ENCODE measurements at regions of chr6 and their contacts with region 1.

Region 1: DNA sequence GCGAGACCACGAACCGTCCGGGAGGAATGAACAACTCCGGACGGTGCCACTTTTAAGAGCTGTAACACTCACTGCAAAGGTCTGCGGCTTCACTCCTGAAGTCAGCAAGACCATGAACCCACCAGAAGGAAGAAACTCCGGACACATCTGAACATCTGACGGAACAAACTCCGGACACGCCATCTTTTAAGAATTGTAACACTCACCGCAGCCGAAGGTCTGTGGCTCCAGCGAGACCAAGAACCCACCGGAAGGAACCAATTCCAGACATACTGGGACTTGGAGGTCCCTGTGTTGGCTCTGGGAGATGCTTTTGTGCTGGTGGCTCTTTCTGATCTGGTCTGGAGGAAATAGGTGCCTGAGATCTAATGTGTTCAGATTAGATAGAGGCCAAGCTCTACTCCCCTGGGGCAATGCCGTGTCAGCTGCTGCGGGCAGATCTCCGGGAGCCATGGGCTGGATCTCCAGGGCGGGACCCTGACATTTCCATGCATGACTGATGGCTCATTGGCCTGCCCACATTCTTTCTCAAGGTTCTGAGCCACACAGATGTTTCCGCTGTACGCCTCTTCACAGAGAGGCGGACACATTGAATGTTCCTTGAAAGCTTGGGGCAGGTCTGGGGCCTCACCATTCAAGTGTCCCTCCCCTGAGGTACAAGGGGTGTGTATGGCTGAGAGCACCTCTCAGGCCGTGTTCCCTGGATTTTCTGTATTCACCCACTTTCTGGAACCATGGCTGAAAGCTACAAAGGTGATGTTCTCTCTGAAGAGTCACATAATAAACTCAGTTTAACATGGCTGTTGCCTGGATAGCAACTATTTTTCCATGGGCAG is 29.3 kb downstream of the GMPR start:
- DNase-seq: peak; percentile 91 to 98 (median 92)
- ATAC-seq: peak; percentile 81
- H3K4me3 ChIP-seq: peak overlapping the region; percentile 42
- H3K27ac ChIP-seq: peak overlapping the region; percentile 83
- H3K4me1 ChIP-seq: peaks cover 28 to 44% of the 10 kb centered on the region in 2 experiments
- H3K27me3 ChIP-seq: no peaks in the 10 kb centered on the region
- CTCF ChIP-seq: no peak
- EP300 ChIP-seq: peak; percentile 96
- POLR2A ChIP-seq: peak; percentile 89
- RAD21 ChIP-seq: no peak; a peak in 1 of 4 replicates

Region 2: DNA sequence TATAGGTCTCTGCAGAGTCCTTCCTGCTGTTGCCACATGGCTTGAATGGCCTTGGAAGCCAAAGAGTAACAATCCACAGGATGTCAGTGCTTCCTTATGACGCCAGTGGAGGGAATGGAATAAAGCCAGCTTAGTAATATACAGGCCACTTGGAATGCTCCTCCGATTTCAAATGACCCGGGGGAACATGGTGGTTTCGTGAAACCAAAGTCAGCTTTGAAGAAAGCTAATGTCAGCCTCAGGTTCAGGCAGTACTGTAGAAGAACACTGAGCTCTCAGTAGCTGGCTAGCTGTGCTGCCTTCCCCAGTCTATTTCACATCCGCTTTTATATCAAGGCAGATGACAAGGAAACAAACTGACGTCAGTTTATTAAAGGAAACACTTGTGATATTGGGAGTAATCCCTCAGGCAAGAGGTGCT is 793.9 kb before region 1 on chr6:
- CTCF ChIA-PET with region 1: no interaction called
- POLR2A ChIA-PET with region 1: no interaction called
- in situ Hi-C with region 1: no loop called
- intact Hi-C with region 1: no loop called
- DNase-seq: no peak
- ATAC-seq: no peak
- H3K4me3 ChIP-seq: no peak overlapping the region
- H3K27ac ChIP-seq: no peak overlapping the region
- H3K4me1 ChIP-seq: 0 out of 5 replicates have a peak, but pooled peaks cover 0 to 3% of the 10 kb centered on the region in 2 experiments
- H3K27me3 ChIP-seq: no peaks in the 10 kb centered on the region
- CTCF ChIP-seq: no peak
- EP300 ChIP-seq: no peak
- POLR2A ChIP-seq: no peak
- RAD21 ChIP-seq: no peak

Region 3: GRCh38 chr6:15893556-15894268 is 373.9 kb before region 1 on chr6:
- CTCF ChIA-PET with region 1: no interaction called
- POLR2A ChIA-PET with region 1: interaction called, 5 read pairs
- in situ Hi-C with region 1: no loop called
- intact Hi-C with region 1: loop called (anchors 5 kb)
- DNase-seq: peak; percentile 61 to 81 (median 70)
- ATAC-seq: 0 out of 3 replicates have a peak, but pooled peaks have one; percentile 9
- H3K4me3 ChIP-seq: no peak overlapping the region
- H3K27ac ChIP-seq: 0 out of 3 replicates have a peak overlapping the region, but pooled peaks have one; percentile 6
- H3K4me1 ChIP-seq: peaks cover 14 to 51% of the 10 kb centered on the region in 2 experiments
- H3K27me3 ChIP-seq: no peaks in the 10 kb centered on the region
- CTCF ChIP-seq: peak; percentile 58 to 85 (median 72); a peak in 5 of 6 replicates
- EP300 ChIP-seq: peak; percentile 26; the same call in 1 of the 2 replicates
- POLR2A ChIP-seq: no peak
- RAD21 ChIP-seq: peak; percentile 77 to 93

Region 4: DNA sequence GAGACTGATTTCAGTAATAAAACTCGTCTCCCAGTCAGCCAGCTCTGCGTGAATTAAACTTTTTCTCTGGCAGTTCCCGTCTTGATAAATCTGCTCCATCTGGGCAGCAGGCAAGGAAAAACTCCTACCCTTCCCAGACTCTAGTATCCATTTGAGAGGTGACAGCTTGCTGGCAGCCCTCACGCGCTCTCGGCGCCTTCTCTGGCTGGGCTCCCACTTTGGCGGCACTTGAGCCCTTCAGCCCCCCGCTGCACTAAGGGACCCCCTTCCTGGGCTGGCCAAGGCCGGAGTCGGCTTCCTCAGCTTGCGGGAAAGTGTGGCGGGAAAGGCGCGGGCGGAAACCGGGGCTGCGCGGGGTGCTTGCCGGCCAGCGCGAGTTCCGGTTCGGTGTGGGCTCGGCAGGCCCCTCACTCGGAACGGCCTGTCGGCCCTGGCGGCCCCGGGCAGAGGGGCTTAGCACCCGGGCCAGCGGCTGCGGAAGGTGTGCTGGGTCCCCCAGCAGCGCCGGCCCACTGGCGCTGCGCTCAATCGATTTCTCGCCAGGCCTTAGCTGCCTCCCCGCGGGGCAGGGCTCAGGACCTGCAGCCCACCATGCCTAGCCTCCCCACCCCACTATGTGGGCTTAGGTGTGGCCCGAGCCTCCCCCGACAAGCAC is 51.0 kb before region 1 on chr6:
- CTCF ChIA-PET with region 1: no interaction called
- POLR2A ChIA-PET with region 1: interaction called, 42 read pairs
- in situ Hi-C with region 1: no loop called
- intact Hi-C with region 1: loop called (anchors 1 kb)
- DNase-seq: no peak
- ATAC-seq: no peak
- H3K4me3 ChIP-seq: no peak overlapping the region
- H3K27ac ChIP-seq: peak overlapping the region; percentile 93
- H3K4me1 ChIP-seq: peaks cover 26 to 38% of the 10 kb centered on the region in 2 experiments
- H3K27me3 ChIP-seq: no peaks in the 10 kb centered on the region
- CTCF ChIP-seq: no peak
- EP300 ChIP-seq: no peak
- POLR2A ChIP-seq: no peak
- RAD21 ChIP-seq: no peak

Region 5: DNA sequence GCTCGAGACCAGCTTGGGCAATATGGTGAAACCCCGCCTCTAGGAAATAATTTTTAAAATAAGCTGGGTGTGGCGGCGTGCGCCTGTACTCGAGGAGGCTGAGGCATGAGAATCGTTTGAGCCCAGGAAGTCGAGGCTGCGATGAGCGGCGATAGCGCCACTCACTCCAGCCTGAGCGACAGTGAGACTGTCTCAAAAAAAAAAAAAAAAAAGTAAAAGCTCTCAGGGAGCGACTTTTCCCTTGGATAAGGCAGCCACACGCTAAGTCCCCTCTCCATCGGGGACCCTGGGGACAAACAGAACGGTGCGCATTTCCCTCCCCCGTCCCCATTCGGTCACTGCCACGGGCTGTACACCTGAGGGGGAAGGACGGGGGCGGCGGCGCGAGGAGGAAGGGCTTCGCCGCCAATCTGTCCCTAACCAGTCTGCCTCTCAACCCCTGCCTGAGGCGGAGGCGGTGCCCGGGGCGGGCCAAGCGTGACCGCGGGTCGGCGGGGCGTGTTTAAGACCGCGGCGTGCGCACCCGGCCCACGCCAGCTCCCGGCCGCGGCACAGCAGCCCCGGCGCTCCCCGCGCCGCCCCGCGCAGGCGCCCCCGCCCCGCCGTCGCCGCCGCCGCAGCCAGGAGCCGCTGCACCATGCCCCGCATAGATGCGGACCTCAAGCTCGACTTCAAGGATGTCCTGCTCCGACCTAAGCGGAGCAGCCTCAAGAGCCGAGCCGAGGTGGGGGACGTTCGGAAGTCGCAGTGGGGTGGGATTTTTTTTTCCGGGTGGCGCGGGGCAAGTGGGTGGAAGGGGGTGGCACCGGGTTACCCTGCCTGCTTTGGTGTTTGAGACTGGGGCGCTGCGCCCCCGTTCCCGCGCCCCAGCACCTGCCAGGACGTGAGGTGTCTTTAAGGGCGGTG is 29.3 kb before region 1 on chr6 and contains the start of gene GMPR:
- CTCF ChIA-PET with region 1: no interaction called
- POLR2A ChIA-PET with region 1: interaction called, 116 read pairs
- in situ Hi-C with region 1: no loop called
- intact Hi-C with region 1: loop called (anchors 1 kb)
- DNase-seq: peak; percentile 91 to 96 (median 94)
- ATAC-seq: peak; percentile 85
- H3K4me3 ChIP-seq: peak within 1 kb of the TSS; percentile 58
- H3K27ac ChIP-seq: peak within 1 kb of the TSS; percentile 72
- H3K4me1 ChIP-seq: peaks cover 45 to 58% of the 10 kb centered on the region in 2 experiments
- H3K27me3 ChIP-seq: no peaks in the 10 kb centered on the region
- CTCF ChIP-seq: peak in 2 of 3 experiments; percentile 1 to 28; a peak in 1 of 6 replicates
- EP300 ChIP-seq: no peak
- POLR2A ChIP-seq: peak; percentile 72
- RAD21 ChIP-seq: no peak
- polyA plus RNA-seq, gene GMPR: 42.0 to 47.8 TPM

Region 6: DNA sequence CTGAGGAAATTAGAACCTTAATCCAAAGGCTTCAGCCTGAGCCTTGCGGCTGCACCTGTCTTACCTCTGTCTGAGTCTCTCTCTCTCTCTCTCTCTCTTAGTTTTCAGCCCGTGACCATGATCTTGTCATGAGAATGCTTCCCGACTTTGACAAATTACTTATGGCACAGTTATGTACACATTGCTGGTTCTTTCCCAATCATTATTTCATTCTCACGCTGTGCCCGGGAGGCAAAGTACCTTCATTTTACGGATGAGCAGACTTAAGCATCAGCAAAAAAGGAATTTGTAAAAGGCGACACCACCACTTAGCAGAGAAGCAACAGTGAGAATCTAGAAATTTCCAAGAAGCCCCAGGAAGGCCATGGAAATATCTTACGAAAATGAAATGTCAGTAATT is 25.3 kb after region 1 on chr6:
- CTCF ChIA-PET with region 1: no interaction called
- POLR2A ChIA-PET with region 1: interaction called, 36 read pairs
- in situ Hi-C with region 1: no loop called
- intact Hi-C with region 1: no loop called
- DNase-seq: no peak
- ATAC-seq: no peak
- H3K4me3 ChIP-seq: no peak overlapping the region
- H3K27ac ChIP-seq: no peak overlapping the region
- H3K4me1 ChIP-seq: peaks cover 0 to 6% of the 10 kb centered on the region in 2 experiments; a peak in 1 of 5 replicates
- H3K27me3 ChIP-seq: no peaks in the 10 kb centered on the region
- CTCF ChIP-seq: no peak
- EP300 ChIP-seq: no peak
- POLR2A ChIP-seq: no peak
- RAD21 ChIP-seq: no peak